ENCODE measurements at regions of chr7 and their contacts with region 1.

Region 1: DNA sequence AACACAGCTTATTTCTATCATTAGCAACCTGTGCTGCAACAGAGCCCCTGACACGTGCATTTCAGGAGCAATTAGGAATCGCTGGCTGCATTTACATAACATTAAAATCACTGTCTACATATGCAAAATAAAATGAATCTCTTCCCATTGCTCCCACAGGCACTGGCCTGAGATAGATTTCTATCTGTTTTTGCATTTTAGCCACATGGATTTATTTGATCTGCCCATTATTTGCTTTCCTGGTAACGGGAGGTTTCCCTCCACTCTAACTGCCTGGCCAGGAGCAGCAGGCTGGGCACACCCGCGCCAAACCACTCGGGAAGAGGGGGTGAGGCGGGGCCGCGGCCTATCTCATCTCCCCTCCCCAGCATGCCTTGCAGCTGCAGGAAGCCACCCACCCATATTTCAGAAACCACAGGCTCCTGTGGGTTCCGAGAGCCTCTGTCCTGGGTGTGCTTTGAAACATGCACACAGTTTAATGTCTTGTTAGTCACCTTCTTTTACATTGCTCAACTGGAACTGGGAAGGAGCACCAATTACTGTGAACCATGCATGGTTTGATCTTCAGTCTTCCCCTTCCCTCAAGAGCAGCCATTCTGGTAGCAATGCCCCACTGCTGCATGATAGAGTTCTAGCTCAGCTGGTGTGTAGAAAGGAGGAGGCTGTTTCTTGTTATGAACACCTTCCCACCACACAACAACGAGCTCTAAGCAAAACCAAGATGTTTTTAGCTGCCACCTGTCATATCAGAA is 37.7 kb upstream of the IKZF1 start:
- DNase-seq: peak; percentile 44 to 90 (median 82)
- ATAC-seq: peak; percentile 80
- H3K4me3 ChIP-seq: peak overlapping the region; percentile 29 to 31
- H3K4me3 Mint-ChIP-seq: peak overlapping the region; percentile 82
- H3K27ac ChIP-seq: peak overlapping the region; percentile 29 to 74
- H3K27ac Mint-ChIP-seq: peak overlapping the region; percentile 96
- H3K4me1 ChIP-seq: peaks cover 92% of the 10 kb centered on the region
- H3K4me1 Mint-ChIP-seq: peaks cover 98% of the 10 kb centered on the region
- H3K27me3 ChIP-seq: no peaks in the 10 kb centered on the region
- H3K27me3 Mint-ChIP-seq: no peaks in the 10 kb centered on the region
- CTCF ChIP-seq: no peak

Region 2: GRCh38 chr7:50212666-50213621 is 53.9 kb before region 1 on chr7:
- CTCF ChIA-PET with region 1: interaction called, 3 read pairs
- POLR2A ChIA-PET with region 1: interaction called, 16 read pairs
- intact Hi-C with region 1: loop called in 1 of 2 experiments (anchors 2 kb)
- DNase-seq: peak in 1 of 9 experiments; percentile 49
- ATAC-seq: peak; percentile 31
- H3K4me3 ChIP-seq: no peak overlapping the region
- H3K4me3 Mint-ChIP-seq: peak overlapping the region; percentile 27
- H3K27ac ChIP-seq: no peak overlapping the region
- H3K27ac Mint-ChIP-seq: peak overlapping the region; percentile 70
- H3K4me1 ChIP-seq: peaks cover 95% of the 10 kb centered on the region
- H3K4me1 Mint-ChIP-seq: peaks cover 97% of the 10 kb centered on the region
- H3K27me3 ChIP-seq: no peaks in the 10 kb centered on the region
- H3K27me3 Mint-ChIP-seq: no peaks in the 10 kb centered on the region
- CTCF ChIP-seq: no peak

Region 3: GRCh38 chr7:50246551-50246950 is 20.3 kb before region 1 on chr7:
- CTCF ChIA-PET with region 1: interaction called, 7 read pairs
- POLR2A ChIA-PET with region 1: interaction called, 6 read pairs
- intact Hi-C with region 1: loop called in 1 of 2 experiments (anchors 2 kb)
- DNase-seq: no peak
- ATAC-seq: no peak
- H3K4me3 ChIP-seq: no peak overlapping the region
- H3K4me3 Mint-ChIP-seq: no peak overlapping the region
- H3K27ac ChIP-seq: no peak overlapping the region
- H3K27ac Mint-ChIP-seq: no peak overlapping the region
- H3K4me1 ChIP-seq: no peaks in the 10 kb centered on the region
- H3K4me1 Mint-ChIP-seq: peaks cover 8% of the 10 kb centered on the region
- H3K27me3 ChIP-seq: no peaks in the 10 kb centered on the region
- H3K27me3 Mint-ChIP-seq: no peaks in the 10 kb centered on the region
- CTCF ChIP-seq: no peak

Region 4: DNA sequence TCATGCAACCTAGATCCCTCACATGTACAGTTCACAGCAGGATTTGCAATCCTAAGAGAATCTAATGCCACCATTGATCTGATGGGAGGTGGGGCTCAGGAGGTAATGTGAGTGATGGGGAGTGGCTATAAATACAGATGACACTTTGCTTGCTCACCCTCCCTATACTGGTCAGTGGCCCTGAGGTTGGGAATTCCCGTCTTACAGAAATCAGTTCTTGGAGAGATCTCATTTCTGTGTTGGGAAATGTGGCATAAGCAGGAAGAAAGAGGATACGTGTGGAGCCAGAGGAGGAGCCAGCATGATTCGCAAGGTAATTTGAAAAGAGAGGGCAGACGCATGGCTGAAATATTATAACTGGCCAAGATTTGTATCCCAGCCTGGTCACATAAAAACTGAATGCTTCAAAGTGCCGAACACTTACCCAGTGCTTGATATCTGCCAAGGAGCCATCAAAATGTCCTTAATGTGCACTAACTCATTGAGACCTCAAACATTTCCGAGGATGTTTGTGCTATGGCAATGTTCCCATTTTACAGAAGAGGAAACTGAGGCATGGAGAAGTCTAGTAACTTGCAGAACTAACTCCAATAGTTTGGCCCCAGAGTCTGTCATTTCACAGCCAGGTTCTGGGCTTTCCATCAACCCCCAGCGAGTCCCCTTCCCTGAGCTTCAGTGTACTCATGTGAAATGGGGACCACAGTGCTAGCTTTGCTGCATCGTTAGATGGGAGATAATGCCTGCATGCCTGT is 32.2 kb after region 1 on chr7:
- CTCF ChIA-PET with region 1: interaction called, 4 read pairs
- POLR2A ChIA-PET with region 1: interaction called, 75 read pairs
- intact Hi-C with region 1: loop called in 1 of 2 experiments (anchors 1 kb)
- DNase-seq: no peak
- ATAC-seq: no peak
- H3K4me3 ChIP-seq: no peak overlapping the region
- H3K4me3 Mint-ChIP-seq: no peak overlapping the region
- H3K27ac ChIP-seq: no peak overlapping the region
- H3K27ac Mint-ChIP-seq: peak overlapping the region; percentile 6
- H3K4me1 ChIP-seq: peaks cover 33% of the 10 kb centered on the region
- H3K4me1 Mint-ChIP-seq: peaks cover 47% of the 10 kb centered on the region
- H3K27me3 ChIP-seq: no peaks in the 10 kb centered on the region
- H3K27me3 Mint-ChIP-seq: no peaks in the 10 kb centered on the region
- CTCF ChIP-seq: no peak

Region 5: GRCh38 chr7:50335795-50336754 is 69.3 kb after region 1 on chr7:
- CTCF ChIA-PET with region 1: interaction called, 3 read pairs
- POLR2A ChIA-PET with region 1: interaction called, 6 read pairs
- intact Hi-C with region 1: loop called in 1 of 2 experiments (anchors 2 kb)
- DNase-seq: peak; percentile 55 to 91 (median 84)
- ATAC-seq: peak; percentile 55
- H3K4me3 ChIP-seq: peak overlapping the region; percentile 10 to 19
- H3K4me3 Mint-ChIP-seq: peak overlapping the region; percentile 77
- H3K27ac ChIP-seq: peak overlapping the region; percentile 40 to 90
- H3K27ac Mint-ChIP-seq: no peak overlapping the region
- H3K4me1 ChIP-seq: peaks cover 99% of the 10 kb centered on the region
- H3K4me1 Mint-ChIP-seq: peaks cover 35% of the 10 kb centered on the region
- H3K27me3 ChIP-seq: no peaks in the 10 kb centered on the region
- H3K27me3 Mint-ChIP-seq: no peaks in the 10 kb centered on the region
- CTCF ChIP-seq: no peak

Region 6: DNA sequence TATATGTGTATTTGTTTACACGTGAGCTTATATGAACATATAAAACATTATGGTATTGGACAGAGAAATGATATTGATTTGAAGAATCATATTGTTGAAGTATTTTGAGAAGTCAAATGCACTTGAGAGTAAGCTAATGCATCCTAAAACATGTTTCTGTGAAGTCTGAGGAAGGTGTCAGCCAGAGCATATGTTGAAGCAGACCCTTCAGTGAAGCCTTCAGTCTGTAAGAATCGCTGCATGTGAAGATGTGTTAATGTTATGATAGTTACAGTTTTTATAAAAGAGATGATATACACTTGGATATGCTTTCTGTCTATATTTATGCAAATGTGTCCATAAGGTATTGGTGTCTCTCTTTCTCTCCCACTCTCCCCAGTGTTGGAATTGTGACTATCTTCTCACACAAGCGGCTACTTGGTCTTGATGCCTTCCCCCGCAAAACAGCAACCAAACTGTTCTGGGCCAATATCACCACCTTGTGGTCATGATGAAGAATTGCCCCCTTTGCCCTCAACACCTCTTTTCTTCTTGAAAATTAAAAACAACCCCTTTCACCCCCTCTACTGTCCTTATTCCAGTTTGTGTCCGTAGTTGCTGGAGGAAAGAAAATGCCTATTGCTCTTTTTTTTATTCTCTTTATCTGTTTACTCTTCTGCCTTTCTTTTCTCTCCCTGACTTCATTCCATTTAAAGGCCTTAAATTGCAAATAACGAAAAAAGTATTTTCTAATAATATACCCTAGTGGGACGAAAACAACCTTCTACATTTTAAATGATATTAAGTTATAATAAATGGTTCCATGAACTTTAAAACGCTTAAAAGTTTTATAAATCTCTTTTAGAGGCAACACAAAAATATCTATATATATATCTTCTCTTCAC is 102.6 kb after region 1 on chr7:
- CTCF ChIA-PET with region 1: interaction called, 7 read pairs
- POLR2A ChIA-PET with region 1: interaction called, 6 read pairs
- intact Hi-C with region 1: loop called (anchors 1 to 2 kb)
- DNase-seq: peak in 4 of 9 experiments; percentile 55 to 92 (median 73)
- ATAC-seq: peak; percentile 58
- H3K4me3 ChIP-seq: no peak overlapping the region
- H3K4me3 Mint-ChIP-seq: peak overlapping the region; percentile 44
- H3K27ac ChIP-seq: peak overlapping the region in 1 of 2 experiments; percentile 67
- H3K27ac Mint-ChIP-seq: peak overlapping the region; percentile 99
- H3K4me1 ChIP-seq: peaks cover 95% of the 10 kb centered on the region
- H3K4me1 Mint-ChIP-seq: peaks cover 95% of the 10 kb centered on the region
- H3K27me3 ChIP-seq: no peaks in the 10 kb centered on the region
- H3K27me3 Mint-ChIP-seq: no peaks in the 10 kb centered on the region
- CTCF ChIP-seq: peak; percentile 92

Measured in CD8-positive, alpha-beta T cell (primary cell).